A549 (cell line): ENCODE measurements at regions of chr2 and their contacts with region 1.

Region 1: DNA sequence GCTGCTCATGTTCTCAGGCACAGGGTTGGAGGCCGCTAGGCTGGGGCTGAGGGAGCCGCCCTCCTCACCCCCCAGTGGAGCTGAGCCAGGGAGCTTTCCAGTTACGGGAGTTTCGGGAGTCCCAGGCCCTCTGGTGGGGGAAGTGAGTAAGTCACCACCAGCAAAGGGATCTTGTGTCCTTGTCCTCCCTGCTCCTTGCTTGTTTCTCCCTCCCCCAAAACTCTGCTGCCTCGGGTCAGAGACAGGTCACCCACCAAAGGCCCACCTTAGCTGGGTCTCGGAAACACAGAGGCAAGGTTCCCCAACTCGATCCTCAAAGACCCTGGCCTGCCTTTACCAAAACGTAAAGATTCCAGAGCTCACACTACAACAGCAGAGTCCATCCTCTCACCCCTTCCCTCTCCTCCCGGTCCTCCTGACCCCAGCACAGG is 60.5 kb upstream of the POMC start:
- DNase-seq: peak; percentile 84 to 97
- ATAC-seq: peak; percentile 94 to 98
- H3K4me3 ChIP-seq: no peak overlapping the region
- H3K27ac ChIP-seq: peak overlapping the region in 1 of 2 experiments; percentile 11; a peak in 1 of 6 replicates
- H3K4me1 ChIP-seq: peaks cover 9% of the 10 kb centered on the region
- CTCF ChIP-seq: peak; percentile 66
- EP300 ChIP-seq: no peak
- POLR2A ChIP-seq: no peak
- RAD21 ChIP-seq: peak; percentile 36 to 57; a peak in 3 of 5 replicates

Region 2: DNA sequence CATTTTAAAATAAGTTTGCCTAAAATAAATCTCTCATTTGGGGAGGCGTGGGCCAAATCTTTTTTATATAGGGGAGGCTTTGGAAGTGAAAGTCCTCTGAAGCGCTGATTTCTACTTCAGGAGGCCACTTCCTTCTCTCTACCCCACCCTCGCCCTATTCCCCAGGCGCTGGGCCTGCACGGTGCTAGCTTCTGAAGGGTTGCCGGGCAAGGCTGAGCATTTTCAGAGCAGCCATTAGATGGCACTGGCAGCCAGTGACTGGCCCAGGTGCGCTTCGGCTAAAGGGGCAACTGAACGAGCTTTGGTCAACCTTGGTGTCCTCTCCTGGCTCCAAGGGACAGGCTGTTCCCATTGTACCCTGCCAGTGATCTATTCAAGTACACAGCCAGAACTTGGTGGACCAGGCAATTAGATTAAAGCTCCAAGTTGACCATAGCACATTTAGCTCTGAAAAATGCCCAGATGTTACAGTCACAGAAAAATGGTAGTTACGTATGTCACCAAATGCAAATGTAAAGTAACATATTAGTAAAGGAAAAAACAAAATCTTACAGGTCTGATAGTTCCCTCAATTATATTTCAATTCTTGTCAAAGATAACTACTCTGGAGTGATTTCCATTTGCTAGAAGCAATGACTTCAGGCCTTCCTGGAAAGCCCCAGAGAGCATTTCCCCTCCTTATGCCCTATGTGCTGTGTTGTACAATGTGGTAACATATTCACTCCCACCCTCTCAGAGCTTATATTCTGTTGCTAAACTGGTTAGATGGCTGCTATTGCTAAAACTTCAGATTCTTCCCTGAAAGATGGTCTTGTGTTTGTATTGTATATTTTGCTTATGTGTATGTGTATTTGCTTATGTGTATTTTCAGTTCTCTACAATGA is 62.6 kb before region 1 on chr2:
- CTCF ChIA-PET with region 1: interaction called, 34 read pairs
- POLR2A ChIA-PET with region 1: no interaction called
- DNase-seq: peak; percentile 26 to 61
- ATAC-seq: peak; percentile 66 to 86
- H3K4me3 ChIP-seq: no peak overlapping the region
- H3K27ac ChIP-seq: no peak overlapping the region
- H3K4me1 ChIP-seq: no peaks in the 10 kb centered on the region
- CTCF ChIP-seq: peak; percentile 71
- EP300 ChIP-seq: no peak
- POLR2A ChIP-seq: no peak
- RAD21 ChIP-seq: peak; percentile 76 to 81

Region 3: GRCh38 chr2:25204190-25204838 is 24.5 kb before region 1 on chr2:
- CTCF ChIA-PET with region 1: interaction called, 13 read pairs
- POLR2A ChIA-PET with region 1: no interaction called
- DNase-seq: no peak
- ATAC-seq: no peak
- H3K4me3 ChIP-seq: no peak overlapping the region
- H3K27ac ChIP-seq: no peak overlapping the region
- H3K4me1 ChIP-seq: no peaks in the 10 kb centered on the region
- CTCF ChIP-seq: no peak
- EP300 ChIP-seq: no peak
- POLR2A ChIP-seq: no peak
- RAD21 ChIP-seq: no peak

Region 4: DNA sequence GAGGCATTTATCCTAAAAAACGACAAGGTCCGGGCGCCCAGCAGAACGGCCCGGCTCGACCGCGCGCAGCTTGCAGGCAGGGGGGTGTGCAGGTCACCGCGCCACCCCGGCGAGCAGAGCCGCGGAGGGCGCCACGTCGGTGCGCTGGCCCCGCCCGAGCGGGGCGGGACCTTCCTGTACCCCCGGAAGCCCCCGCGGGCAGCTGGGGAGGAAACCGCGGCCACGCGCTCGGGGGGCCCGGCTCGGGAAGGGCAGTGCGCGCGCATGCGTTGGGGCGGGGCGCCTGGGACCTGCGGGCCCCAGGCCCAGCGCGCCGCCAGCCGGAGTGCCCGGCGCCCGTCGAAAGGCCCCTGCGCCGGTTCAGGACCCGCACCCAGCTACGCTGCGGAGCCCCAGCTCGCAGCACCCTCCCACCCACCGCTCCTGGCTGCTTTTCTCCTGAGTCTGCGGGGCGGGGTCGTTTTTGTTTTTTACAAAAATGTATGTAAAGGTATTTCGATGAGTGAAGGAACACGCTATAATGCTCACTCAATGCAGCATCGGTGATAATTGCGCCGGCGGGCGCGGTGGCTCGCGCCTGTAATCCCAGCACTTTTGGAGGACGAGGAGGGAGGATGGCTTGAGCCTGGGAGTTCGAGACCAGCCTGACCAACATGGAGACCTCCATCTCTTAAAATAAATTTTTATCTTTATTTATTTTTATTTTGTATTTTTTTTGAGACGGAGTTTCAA is 12.7 kb before region 1 on chr2:
- CTCF ChIA-PET with region 1: interaction called, 52 read pairs
- POLR2A ChIA-PET with region 1: interaction called, 5 read pairs
- DNase-seq: peak; percentile 58 to 85
- ATAC-seq: peak; percentile 80 to 89
- H3K4me3 ChIP-seq: peak overlapping the region; percentile 51
- H3K27ac ChIP-seq: peak overlapping the region; percentile 70 to 80
- H3K4me1 ChIP-seq: no peaks in the 10 kb centered on the region
- CTCF ChIP-seq: no peak
- EP300 ChIP-seq: no peak
- POLR2A ChIP-seq: peak; percentile 65
- RAD21 ChIP-seq: no peak

Region 5: GRCh38 chr2:25243995-25244394 is 15.1 kb after region 1 on chr2:
- CTCF ChIA-PET with region 1: interaction called, 40 read pairs
- POLR2A ChIA-PET with region 1: no interaction called
- DNase-seq: no peak
- ATAC-seq: no peak
- H3K4me3 ChIP-seq: no peak overlapping the region
- H3K27ac ChIP-seq: no peak overlapping the region
- H3K4me1 ChIP-seq: no peaks in the 10 kb centered on the region
- CTCF ChIP-seq: no peak
- EP300 ChIP-seq: no peak
- POLR2A ChIP-seq: no peak
- RAD21 ChIP-seq: no peak